GM13977 (cell line): ENCODE measurements at regions of chr7 and their contacts with region 1.

Region 1: GRCh38 chr7:75534727-75535307 is 42.7 kb downstream of the SPDYE5 start:
- DNase-seq: peak; percentile 78
- CTCF ChIP-seq: no peak

Region 2: GRCh38 chr7:75054744-75055143 is 480.1 kb before region 1 on chr7:
- in situ Hi-C with region 1: loop called (anchors 25 kb)
- DNase-seq: no peak
- CTCF ChIP-seq: no peak